B cell (primary cell): ENCODE measurements at regions of chr16 and their contacts with region 1.

Region 1: GRCh38 chr16:89241187-89242007 is 23.9 kb downstream of the ZNF778 start:
- DNase-seq: peak; percentile 94
- ATAC-seq: peak; percentile 77
- H3K4me3 ChIP-seq: peak overlapping the region; percentile 74 to 95 (median 82)
- H3K4me3 Mint-ChIP-seq: peak overlapping the region; percentile 99
- H3K27ac ChIP-seq: peak overlapping the region; percentile 93 to 97
- H3K27ac Mint-ChIP-seq: peak overlapping the region; percentile 100
- H3K4me1 ChIP-seq: peaks cover 0 to 11% of the 10 kb centered on the region in 2 donors
- H3K4me1 Mint-ChIP-seq: peaks cover 14% of the 10 kb centered on the region
- H3K27me3 ChIP-seq: no peaks in the 10 kb centered on the region
- H3K27me3 Mint-ChIP-seq: no peaks in the 10 kb centered on the region
- CTCF ChIP-seq: no peak

Region 2: GRCh38 chr16:89657442-89658220 is 416.2 kb after region 1 on chr16 and contains the starts of genes CHMP1A and SPATA33:
- CTCF ChIA-PET with region 1: no interaction called
- POLR2A ChIA-PET with region 1: no interaction called
- intact Hi-C with region 1: loop called (anchors 10 kb)
- DNase-seq: peak; percentile 96
- ATAC-seq: peak; percentile 89
- H3K4me3 ChIP-seq: peak within 1 kb of the TSS; percentile 42 to 97 (median 96)
- H3K4me3 Mint-ChIP-seq: peak within 1 kb of the TSS; percentile 89
- H3K27ac ChIP-seq: peak within 1 kb of the TSS; percentile 38 to 88
- H3K27ac Mint-ChIP-seq: peak within 1 kb of the TSS; percentile 85
- H3K4me1 ChIP-seq: peaks cover 14 to 20% of the 10 kb centered on the region in 2 donors
- H3K4me1 Mint-ChIP-seq: peaks cover 27% of the 10 kb centered on the region
- H3K27me3 ChIP-seq: no peaks in the 10 kb centered on the region
- H3K27me3 Mint-ChIP-seq: no peaks in the 10 kb centered on the region
- CTCF ChIP-seq: no peak
- total RNA-seq, gene CHMP1A: 88.1 and 90.0 TPM in 2 replicates
- total RNA-seq, gene SPATA33: 12.6 and 15.0 TPM in 2 replicates